B cell (primary cell): ENCODE measurements at regions of chr20 and their contacts with region 1.

Region 1: GRCh38 chr20:44609511-44610312 is 27.3 kb downstream of the PKIG start:
- DNase-seq: peak; percentile 89
- ATAC-seq: peak; percentile 96
- H3K4me3 ChIP-seq: peak overlapping the region in 2 of 5 experiments; percentile 5 to 28
- H3K4me3 Mint-ChIP-seq: peak overlapping the region; percentile 84
- H3K27ac ChIP-seq: peak overlapping the region; percentile 67 to 68
- H3K27ac Mint-ChIP-seq: peak overlapping the region; percentile 96
- H3K4me1 ChIP-seq: peaks cover 26 to 33% of the 10 kb centered on the region in 2 donors
- H3K4me1 Mint-ChIP-seq: peaks cover 55% of the 10 kb centered on the region
- H3K27me3 ChIP-seq: no peaks in the 10 kb centered on the region
- H3K27me3 Mint-ChIP-seq: no peaks in the 10 kb centered on the region
- CTCF ChIP-seq: peak; percentile 97

Region 2: GRCh38 chr20:44028868-44029847 is 580.6 kb before region 1 on chr20:
- CTCF ChIA-PET with region 1: no interaction called
- POLR2A ChIA-PET with region 1: no interaction called
- intact Hi-C with region 1: no loop called
- DNase-seq: no peak
- ATAC-seq: no peak
- H3K4me3 ChIP-seq: no peak overlapping the region
- H3K4me3 Mint-ChIP-seq: no peak overlapping the region
- H3K27ac ChIP-seq: no peak overlapping the region
- H3K27ac Mint-ChIP-seq: no peak overlapping the region
- H3K4me1 ChIP-seq: no peaks in the 10 kb centered on the region
- H3K4me1 Mint-ChIP-seq: no peaks in the 10 kb centered on the region
- H3K27me3 ChIP-seq: no peaks in the 10 kb centered on the region
- H3K27me3 Mint-ChIP-seq: peaks cover 7% of the 10 kb centered on the region
- CTCF ChIP-seq: no peak

Region 3: DNA sequence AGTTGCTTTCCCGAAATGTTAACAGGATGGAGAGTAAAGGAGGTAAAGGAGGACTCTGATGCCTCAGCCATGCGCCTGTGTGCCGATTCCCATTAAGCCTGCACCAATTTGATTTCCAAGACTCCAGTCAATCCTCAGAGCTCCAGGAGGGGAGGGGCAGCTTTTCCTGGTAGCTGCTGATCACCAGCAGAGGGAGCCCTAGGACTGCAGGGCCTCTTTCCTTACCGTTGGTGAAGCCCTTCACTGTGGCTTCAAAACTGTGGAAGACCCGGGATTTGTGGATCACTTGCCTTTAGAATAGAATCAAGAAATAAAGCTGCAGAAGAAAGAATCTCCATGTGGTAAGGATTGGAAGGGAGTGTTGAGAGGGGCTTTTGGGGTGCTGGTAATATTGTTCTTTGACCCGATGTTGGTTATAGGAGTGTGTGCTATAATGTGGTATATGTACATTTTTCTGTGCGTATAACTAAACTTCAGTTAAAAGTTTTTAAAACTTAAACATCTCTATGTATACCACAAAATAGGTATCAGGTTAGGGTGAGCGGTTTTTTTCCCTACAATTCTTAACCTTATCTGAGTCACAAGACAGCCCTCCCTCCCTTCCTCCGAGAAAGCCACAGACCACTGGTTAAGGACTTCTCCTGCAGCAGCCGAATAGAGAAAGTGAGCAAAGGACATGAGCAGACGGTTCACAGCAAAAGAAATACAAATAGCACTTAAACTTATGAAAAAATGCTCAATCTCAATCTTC is 392.2 kb before region 1 on chr20:
- CTCF ChIA-PET with region 1: interaction called, 14 read pairs
- POLR2A ChIA-PET with region 1: no interaction called
- intact Hi-C with region 1: loop called (anchors 1 kb)
- DNase-seq: peak; percentile 72
- ATAC-seq: peak; percentile 57
- H3K4me3 ChIP-seq: no peak overlapping the region
- H3K4me3 Mint-ChIP-seq: peak overlapping the region; percentile 40
- H3K27ac ChIP-seq: no peak overlapping the region
- H3K27ac Mint-ChIP-seq: no peak overlapping the region
- H3K4me1 ChIP-seq: peaks cover 18 to 22% of the 10 kb centered on the region in 2 donors
- H3K4me1 Mint-ChIP-seq: peaks cover 34% of the 10 kb centered on the region
- H3K27me3 ChIP-seq: no peaks in the 10 kb centered on the region
- H3K27me3 Mint-ChIP-seq: no peaks in the 10 kb centered on the region
- CTCF ChIP-seq: peak; percentile 94

Region 4: GRCh38 chr20:44264287-44264686 is 345.4 kb before region 1 on chr20:
- CTCF ChIA-PET with region 1: no interaction called
- POLR2A ChIA-PET with region 1: no interaction called
- intact Hi-C with region 1: no loop called
- DNase-seq: no peak
- ATAC-seq: no peak
- H3K4me3 ChIP-seq: no peak overlapping the region
- H3K4me3 Mint-ChIP-seq: no peak overlapping the region
- H3K27ac ChIP-seq: no peak overlapping the region
- H3K27ac Mint-ChIP-seq: no peak overlapping the region
- H3K4me1 ChIP-seq: no peaks in the 10 kb centered on the region
- H3K4me1 Mint-ChIP-seq: no peaks in the 10 kb centered on the region
- H3K27me3 ChIP-seq: no peaks in the 10 kb centered on the region
- H3K27me3 Mint-ChIP-seq: peaks cover 3% of the 10 kb centered on the region
- CTCF ChIP-seq: no peak

Region 5: DNA sequence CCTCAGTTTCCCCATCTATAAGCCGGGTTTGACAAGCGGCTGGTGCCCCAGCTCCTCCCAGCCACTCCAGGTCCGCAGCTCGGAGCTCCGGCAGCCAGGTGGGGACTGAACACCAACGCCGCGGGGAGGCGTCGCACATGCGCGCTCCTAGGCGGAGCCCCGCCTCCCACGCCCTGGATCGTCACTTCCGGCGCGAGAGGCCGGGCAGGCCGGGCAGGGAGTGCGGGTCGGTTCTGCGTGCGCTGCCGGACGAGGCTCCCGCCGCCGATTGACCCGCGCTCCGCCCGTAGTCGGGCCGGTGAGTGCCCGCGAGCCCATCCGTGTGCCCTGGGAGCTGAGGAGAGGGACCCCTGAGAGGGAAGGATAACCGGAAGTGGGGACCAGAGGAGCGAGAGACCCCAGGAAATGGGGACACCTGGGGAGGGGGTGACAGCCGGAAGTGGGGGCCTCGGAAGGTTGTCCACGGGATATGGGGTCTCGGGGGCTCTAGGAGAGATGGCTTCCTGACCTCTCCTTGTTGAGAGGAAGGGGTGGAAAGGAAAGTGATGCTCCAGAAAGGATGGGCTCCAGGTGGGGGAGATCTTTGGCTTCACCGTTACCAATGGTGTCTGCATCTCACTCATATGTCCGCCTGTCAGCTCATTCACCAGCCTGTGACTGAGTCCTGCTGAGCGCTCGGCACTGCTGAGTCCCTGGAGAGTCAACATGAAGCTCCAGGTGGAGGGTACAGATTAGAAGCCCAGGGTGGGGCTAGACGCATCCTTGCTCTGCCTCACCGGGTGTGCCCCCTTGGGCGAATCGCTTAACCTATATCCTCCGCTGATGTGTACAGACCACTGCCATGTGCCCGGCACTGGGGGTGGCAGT is 133.8 kb before region 1 on chr20 and contains the start of gene TTPAL:
- CTCF ChIA-PET with region 1: interaction called, 5 read pairs
- POLR2A ChIA-PET with region 1: no interaction called
- intact Hi-C with region 1: loop called (anchors 2 kb)
- DNase-seq: peak; percentile 93
- ATAC-seq: peak; percentile 94
- H3K4me3 ChIP-seq: peak within 1 kb of the TSS; percentile 70 to 99 (median 78)
- H3K4me3 Mint-ChIP-seq: peak within 1 kb of the TSS; percentile 97
- H3K27ac ChIP-seq: peak within 1 kb of the TSS; percentile 90 to 93
- H3K27ac Mint-ChIP-seq: peak within 1 kb of the TSS; percentile 95
- H3K4me1 ChIP-seq: peaks cover 23 to 34% of the 10 kb centered on the region in 2 donors
- H3K4me1 Mint-ChIP-seq: peaks cover 43% of the 10 kb centered on the region
- H3K27me3 ChIP-seq: no peaks in the 10 kb centered on the region
- H3K27me3 Mint-ChIP-seq: peaks cover 2% of the 10 kb centered on the region
- CTCF ChIP-seq: no peak
- total RNA-seq, gene TTPAL: 26.8 and 27.8 TPM in 2 replicates

Region 6: GRCh38 chr20:44532259-44532980 is 77.3 kb before region 1 on chr20:
- CTCF ChIA-PET with region 1: interaction called, 11 read pairs
- POLR2A ChIA-PET with region 1: no interaction called
- intact Hi-C with region 1: loop called (anchors 1 kb)
- DNase-seq: peak; percentile 16
- ATAC-seq: no peak
- H3K4me3 ChIP-seq: peak overlapping the region; percentile 30 to 86 (median 64)
- H3K4me3 Mint-ChIP-seq: no peak overlapping the region
- H3K27ac ChIP-seq: peak overlapping the region in 1 of 2 donors; percentile 51
- H3K27ac Mint-ChIP-seq: no peak overlapping the region
- H3K4me1 ChIP-seq: peaks cover 11 to 16% of the 10 kb centered on the region in 2 donors
- H3K4me1 Mint-ChIP-seq: peaks cover 6% of the 10 kb centered on the region
- H3K27me3 ChIP-seq: no peaks in the 10 kb centered on the region
- H3K27me3 Mint-ChIP-seq: no peaks in the 10 kb centered on the region
- CTCF ChIP-seq: no peak

Region 7: GRCh38 chr20:44598423-44599305 is 11.0 kb before region 1 on chr20:
- CTCF ChIA-PET with region 1: interaction called, 772 read pairs
- POLR2A ChIA-PET with region 1: interaction called, 5 read pairs
- intact Hi-C with region 1: no loop called
- DNase-seq: peak; percentile 42
- ATAC-seq: peak; percentile 32
- H3K4me3 ChIP-seq: peak overlapping the region; percentile 14 to 45 (median 27)
- H3K4me3 Mint-ChIP-seq: peak overlapping the region; percentile 75
- H3K27ac ChIP-seq: peak overlapping the region; percentile 60 to 88
- H3K27ac Mint-ChIP-seq: peak overlapping the region; percentile 97
- H3K4me1 ChIP-seq: peaks cover 94 to 100% of the 10 kb centered on the region in 2 donors
- H3K4me1 Mint-ChIP-seq: peaks cover 82% of the 10 kb centered on the region
- H3K27me3 ChIP-seq: no peaks in the 10 kb centered on the region
- H3K27me3 Mint-ChIP-seq: no peaks in the 10 kb centered on the region
- CTCF ChIP-seq: peak; percentile 27

Region 8: DNA sequence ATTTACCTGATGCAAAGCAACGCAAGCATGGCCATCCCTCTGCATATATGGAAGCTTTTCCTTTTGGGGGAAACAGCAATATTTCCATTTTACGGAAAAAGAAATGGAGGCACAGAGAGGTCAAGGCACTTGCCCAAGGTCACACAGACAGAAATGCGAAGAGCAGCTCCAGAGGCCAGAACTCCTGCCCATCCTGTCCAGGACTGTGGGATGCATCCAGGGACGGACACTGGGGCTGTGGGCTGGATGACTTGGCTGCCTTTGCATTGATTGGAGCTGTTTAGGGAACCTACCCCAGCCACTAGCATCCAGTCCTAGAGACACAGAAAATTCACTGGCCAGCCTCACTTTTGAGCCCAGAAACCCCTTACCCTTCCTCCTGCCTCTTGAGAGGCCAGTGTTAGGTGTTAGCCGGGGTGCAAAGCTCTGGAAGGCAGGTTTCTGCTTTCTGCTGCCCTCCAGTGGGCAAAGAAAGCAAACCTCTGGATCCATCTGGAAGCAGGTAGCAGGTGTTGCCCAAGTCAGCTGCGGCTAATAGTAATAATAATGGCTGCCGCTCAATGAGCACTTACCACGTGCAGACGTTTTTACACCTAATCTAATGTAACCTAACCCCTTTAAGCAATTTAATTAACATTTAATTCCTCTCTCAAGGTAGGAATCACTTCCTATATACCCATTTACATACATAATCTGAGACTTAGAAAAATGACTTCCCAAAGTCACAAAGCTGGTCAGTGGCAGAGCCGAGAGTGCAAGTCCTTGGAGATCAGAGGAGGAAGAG is 73.7 kb after region 1 on chr20:
- CTCF ChIA-PET with region 1: interaction called, 37 read pairs
- POLR2A ChIA-PET with region 1: no interaction called
- intact Hi-C with region 1: no loop called
- DNase-seq: peak; percentile 71
- ATAC-seq: peak; percentile 47
- H3K4me3 ChIP-seq: no peak overlapping the region
- H3K4me3 Mint-ChIP-seq: no peak overlapping the region
- H3K27ac ChIP-seq: no peak overlapping the region
- H3K27ac Mint-ChIP-seq: no peak overlapping the region
- H3K4me1 ChIP-seq: peaks cover 0 to 11% of the 10 kb centered on the region in 2 donors
- H3K4me1 Mint-ChIP-seq: peaks cover 5% of the 10 kb centered on the region
- H3K27me3 ChIP-seq: peaks cover 0 to 3% (median 0%) of the 10 kb centered on the region in 4 experiments
- H3K27me3 Mint-ChIP-seq: peaks cover 10% of the 10 kb centered on the region
- CTCF ChIP-seq: peak; percentile 38

Region 9: GRCh38 chr20:44810391-44811149 is 200.9 kb after region 1 on chr20 and contains the start of gene RIMS4:
- CTCF ChIA-PET with region 1: no interaction called
- POLR2A ChIA-PET with region 1: no interaction called
- intact Hi-C with region 1: no loop called
- DNase-seq: no peak
- ATAC-seq: no peak
- H3K4me3 ChIP-seq: no peak within 1 kb of the TSS
- H3K4me3 Mint-ChIP-seq: peak within 1 kb of the TSS; percentile 54
- H3K27ac ChIP-seq: no peak within 1 kb of the TSS
- H3K27ac Mint-ChIP-seq: peak within 1 kb of the TSS; percentile 12
- H3K4me1 ChIP-seq: peaks cover 5 to 8% of the 10 kb centered on the region in 2 donors
- H3K4me1 Mint-ChIP-seq: peaks cover 10% of the 10 kb centered on the region
- H3K27me3 ChIP-seq: peaks cover 0 to 56% (median 25%) of the 10 kb centered on the region in 4 experiments
- H3K27me3 Mint-ChIP-seq: peaks cover 64% of the 10 kb centered on the region
- CTCF ChIP-seq: no peak
- total RNA-seq, gene RIMS4: not detected in 2 replicates